Cardiac septum (tissue), 1 donor: ENCODE measurements at regions of chr3 and their contacts with region 1.

Region 1: GRCh38 chr3:43503067-43503728 is 118.6 kb downstream of the ANO10 start:
- DNase-seq: no peak

Region 2: DNA sequence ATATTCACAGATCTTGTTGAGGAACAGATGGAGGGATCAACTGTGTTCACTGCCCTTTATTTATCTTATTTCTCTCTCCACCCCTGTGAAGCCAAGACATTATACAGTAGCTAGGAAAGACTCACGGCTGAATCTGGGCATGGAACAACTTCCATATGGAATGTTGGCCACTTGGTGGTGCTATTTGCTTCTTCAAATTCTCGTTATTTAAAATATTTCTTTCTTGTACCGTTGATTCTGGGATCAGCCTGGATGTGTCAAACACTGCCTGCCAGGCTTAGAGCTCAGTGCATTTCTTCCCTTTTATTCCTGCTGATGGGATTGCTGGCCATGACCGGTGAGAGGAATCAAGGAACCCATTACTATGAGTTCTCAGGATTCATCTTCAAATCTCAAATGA is 541.6 kb before region 1 on chr3:
- intact Hi-C with region 1: loop called (anchors 10 kb)
- DNase-seq: no peak

Region 3: DNA sequence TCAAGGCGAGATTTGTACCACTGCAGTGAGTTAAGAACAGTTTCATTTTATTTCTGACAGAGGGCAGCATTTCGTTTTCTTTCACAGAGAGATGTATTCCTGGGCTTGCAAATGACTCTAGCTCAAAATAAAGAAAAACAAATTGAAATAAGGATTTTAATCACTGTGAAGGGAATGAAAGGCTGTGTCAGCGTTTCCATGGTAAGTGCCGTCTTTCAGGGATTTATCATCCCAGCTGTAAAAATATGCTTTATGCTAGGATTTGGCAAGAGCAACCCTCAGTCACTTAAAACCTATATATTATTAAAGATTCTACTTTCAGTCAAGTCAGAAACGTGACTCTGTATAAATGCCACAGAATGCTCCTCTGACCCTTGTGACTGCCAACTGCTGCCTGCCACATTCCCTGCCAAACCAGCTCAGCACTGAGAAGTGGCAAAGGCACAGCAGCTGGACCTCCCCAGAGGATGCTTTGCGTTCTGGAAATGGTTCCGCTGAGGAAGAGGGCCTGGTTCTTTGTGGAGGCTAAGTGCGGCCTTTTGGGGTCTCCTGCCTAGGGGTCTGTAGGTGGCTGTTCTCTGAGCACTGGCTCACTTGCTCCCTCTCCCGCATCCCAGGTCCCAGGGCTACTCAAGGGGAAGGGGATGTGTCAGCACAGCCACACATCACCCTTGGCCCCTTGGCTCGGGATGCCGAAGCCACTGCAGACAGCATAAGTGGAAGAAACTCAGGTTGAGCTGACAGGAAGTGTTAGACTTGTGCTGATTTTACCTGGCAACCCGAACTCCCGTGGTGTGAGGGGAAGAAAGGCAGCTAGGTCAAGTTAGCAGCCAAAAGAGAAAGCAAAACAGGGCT is 340.7 kb before region 1 on chr3:
- intact Hi-C with region 1: loop called (anchors 2 kb)
- DNase-seq: no peak

Region 4: GRCh38 chr3:43223670-43224364 is 279.4 kb before region 1 on chr3:
- intact Hi-C with region 1: loop called (anchors 10 kb)
- DNase-seq: no peak

Region 5: DNA sequence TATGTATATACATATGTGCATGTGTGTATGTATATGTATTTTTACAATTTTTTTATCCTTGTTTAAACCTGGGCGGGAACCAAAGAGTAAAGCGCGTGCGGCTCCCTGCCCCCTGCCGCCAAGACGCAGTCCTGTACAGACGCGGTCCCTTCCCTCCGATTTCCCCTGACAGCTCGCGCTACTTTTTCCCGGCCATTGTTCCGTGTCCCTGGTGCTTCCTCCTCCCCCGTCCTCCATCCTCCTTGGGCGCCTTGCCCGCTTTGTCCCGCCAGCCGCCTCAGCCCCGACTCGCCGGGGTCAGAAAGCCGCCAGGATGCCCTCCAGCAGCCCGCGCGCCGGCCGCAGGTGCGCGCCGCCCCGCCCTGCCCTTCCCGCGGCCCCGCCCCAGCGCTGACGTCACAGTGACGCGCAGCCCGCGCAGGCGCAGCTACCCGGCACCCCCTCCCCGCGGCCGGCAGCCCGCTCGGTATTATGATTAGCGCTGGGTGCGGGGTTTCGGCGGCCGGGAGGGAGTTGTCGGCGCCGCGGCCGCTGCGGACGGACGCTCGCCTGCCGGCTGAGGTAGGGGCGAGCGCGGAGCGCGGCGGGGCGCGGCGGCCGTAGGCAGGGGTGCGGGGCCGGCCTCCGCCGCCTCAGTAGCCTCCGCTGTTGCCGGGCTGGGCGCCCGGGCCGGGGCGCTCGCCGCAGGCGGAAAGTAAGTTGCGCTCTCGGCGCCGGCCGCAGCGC is 216.9 kb before region 1 on chr3 and contains the start of gene SNRK:
- intact Hi-C with region 1: no loop called
- DNase-seq: peak; percentile 98
- total RNA-seq, gene SNRK: 25.1 TPM

Region 6: DNA sequence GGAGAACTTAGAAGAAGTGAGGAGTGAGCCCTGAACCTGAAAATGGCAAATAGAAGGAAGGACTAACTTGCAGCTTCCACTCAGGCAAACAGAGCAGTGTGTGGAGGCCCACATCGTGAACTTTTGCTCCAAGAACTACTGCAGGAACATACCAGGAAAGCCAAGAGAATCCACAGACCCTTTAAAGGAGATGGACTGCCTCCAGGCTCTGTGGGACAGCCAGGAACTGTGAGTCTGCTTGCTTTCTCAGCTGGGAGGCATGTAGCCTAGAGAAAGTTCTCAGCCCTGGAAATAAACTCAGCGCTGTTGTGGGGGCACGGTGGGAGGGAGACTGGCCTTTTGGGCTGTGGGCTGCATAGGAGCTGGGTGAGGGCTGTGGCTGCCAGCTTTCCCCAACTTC is 123.9 kb before region 1 on chr3:
- intact Hi-C with region 1: no loop called
- DNase-seq: no peak

Region 7: DNA sequence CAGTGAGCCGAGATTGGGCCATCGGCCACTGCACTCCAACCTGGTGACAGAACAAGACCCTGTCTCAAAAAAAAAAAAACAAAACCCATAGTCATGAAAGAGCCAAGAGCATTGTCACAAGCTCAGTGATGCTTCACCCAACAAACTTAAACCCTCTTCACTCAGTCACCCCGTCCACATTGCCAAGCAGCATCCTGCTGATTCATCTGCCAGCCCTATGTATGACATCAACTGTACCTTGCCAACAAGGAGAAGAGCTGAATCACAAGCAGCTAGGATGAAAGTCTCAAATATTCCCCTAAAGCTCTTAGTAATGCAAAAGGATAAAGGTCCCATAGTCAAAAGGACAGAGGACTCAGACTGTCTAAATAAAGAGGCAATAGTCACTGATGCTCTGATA is 28.6 kb after region 1 on chr3:
- intact Hi-C with region 1: no loop called
- DNase-seq: no peak

Region 8: GRCh38 chr3:43584043-43584826 is 81.0 kb after region 1 on chr3:
- intact Hi-C with region 1: no loop called
- DNase-seq: no peak